Activated CD8-positive, alpha-beta T cell treated with anti-CD3 and anti-CD28 coated beads for 36 hours (primary cell): ENCODE measurements at regions of chr16 and their contacts with region 1.

Region 1: GRCh38 chr16:28943281-28943680 is 7.5 kb upstream of the NFATC2IP start:
- DNase-seq: no peak
- ATAC-seq: no peak
- H3K4me3 Mint-ChIP-seq: no peak overlapping the region
- H3K27ac Mint-ChIP-seq: no peak overlapping the region
- H3K4me1 Mint-ChIP-seq: peaks cover 8% of the 10 kb centered on the region
- H3K27me3 Mint-ChIP-seq: no peaks in the 10 kb centered on the region
- CTCF ChIP-seq: no peak

Region 2: DNA sequence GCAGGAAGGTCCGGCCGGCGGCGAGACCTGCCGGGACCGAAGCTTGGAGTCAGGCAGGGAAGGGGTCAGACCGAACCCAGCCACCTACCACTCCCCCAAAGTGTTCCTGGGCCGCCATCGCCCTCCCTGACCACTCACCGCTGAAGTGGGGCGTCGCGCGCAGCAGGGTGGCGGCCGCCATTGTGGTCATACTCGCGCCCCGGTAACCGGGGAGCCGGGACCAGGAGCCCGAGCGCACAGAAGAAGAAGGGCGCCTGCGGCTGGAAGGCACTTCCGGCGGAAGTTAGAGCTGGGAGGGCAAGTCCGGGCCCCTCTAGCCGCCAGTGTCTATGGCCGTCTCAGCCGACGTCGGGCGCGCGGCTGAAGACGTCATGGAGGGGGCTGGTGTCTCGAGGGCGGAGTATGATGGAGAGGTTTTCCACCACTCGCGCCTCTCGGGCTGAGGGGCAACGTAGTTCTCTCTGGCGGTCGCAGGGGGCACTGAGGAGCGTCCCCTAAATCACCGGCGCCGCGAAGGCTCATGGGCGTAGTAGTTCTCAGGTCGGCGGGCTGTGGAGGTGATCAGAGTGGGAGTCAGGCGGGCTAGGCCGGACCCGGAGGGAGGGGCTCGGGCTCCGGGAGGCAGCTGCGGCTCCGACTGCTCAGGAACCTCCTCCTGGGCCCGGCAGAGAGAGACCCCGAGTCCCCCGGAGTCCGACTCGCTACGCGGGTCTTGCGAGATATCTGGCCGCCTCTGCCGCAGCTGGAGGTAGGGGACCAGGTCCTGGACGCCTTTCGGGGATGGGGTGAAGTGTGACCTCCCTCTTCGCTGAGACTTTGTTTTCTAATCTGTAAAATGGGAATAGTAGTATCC is 97.0 kb before region 1 on chr16 and contains the start of gene TUFM:
- CTCF ChIA-PET with region 1: interaction called, 36 read pairs
- POLR2A ChIA-PET with region 1: interaction called, 3 read pairs
- intact Hi-C with region 1: no loop called
- DNase-seq: peak; percentile 98
- ATAC-seq: peak; percentile 95
- H3K4me3 Mint-ChIP-seq: peak within 1 kb of the TSS; percentile 99
- H3K27ac Mint-ChIP-seq: peak within 1 kb of the TSS; percentile 98
- H3K4me1 Mint-ChIP-seq: peaks cover 20% of the 10 kb centered on the region
- H3K27me3 Mint-ChIP-seq: no peaks in the 10 kb centered on the region
- CTCF ChIP-seq: peak; percentile 59
- total RNA-seq, gene TUFM: 309 to 323 TPM

Region 3: DNA sequence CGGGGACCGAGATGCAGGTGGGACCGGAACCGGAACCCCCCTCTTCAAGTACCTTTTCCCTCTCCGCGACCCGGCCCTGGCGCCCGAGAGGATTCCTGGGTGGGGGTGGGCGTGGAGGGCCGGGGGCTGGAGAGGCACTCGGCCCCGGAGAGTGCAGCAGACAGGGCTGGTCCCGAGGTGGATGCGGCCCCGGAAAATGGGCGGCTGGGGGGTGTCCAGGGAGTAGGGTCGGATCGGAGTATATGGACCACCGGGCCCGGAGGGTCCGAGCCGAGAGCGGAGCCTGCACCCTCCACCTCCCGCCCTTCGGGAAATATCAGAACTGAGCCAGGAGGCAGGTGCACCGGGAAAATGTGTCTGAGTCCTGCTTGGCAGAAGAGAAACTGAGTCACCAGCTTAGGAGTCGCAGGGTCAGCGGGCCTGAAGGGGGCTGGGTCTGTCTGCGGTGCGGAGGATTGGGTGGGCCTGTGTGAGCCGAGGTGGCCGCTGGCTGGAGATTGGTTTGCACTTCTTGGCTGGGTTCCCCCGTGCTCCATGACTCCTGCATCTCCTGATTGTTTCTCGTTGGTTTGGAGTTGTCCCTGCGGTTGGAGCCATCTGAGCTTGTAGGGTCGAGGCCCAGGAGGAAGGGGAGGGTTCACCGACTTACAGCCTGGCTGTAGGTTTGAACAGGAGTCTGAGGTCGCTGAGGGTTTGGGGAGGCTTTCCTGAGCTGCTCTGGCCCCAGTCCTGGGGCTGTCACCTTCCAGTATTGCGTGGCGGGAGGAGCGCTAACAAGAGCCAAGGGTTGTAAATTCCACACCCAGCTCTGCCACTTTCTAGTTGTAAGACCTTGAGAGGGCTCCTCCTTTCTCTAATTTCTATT is 79.1 kb before region 1 on chr16:
- CTCF ChIA-PET with region 1: interaction called, 49 read pairs
- POLR2A ChIA-PET with region 1: interaction called, 3 read pairs
- intact Hi-C with region 1: no loop called
- DNase-seq: no peak
- ATAC-seq: no peak
- H3K4me3 Mint-ChIP-seq: peak overlapping the region; percentile 98
- H3K27ac Mint-ChIP-seq: peak overlapping the region; percentile 99
- H3K4me1 Mint-ChIP-seq: peaks cover 24% of the 10 kb centered on the region
- H3K27me3 Mint-ChIP-seq: no peaks in the 10 kb centered on the region
- CTCF ChIP-seq: no peak

Region 4: DNA sequence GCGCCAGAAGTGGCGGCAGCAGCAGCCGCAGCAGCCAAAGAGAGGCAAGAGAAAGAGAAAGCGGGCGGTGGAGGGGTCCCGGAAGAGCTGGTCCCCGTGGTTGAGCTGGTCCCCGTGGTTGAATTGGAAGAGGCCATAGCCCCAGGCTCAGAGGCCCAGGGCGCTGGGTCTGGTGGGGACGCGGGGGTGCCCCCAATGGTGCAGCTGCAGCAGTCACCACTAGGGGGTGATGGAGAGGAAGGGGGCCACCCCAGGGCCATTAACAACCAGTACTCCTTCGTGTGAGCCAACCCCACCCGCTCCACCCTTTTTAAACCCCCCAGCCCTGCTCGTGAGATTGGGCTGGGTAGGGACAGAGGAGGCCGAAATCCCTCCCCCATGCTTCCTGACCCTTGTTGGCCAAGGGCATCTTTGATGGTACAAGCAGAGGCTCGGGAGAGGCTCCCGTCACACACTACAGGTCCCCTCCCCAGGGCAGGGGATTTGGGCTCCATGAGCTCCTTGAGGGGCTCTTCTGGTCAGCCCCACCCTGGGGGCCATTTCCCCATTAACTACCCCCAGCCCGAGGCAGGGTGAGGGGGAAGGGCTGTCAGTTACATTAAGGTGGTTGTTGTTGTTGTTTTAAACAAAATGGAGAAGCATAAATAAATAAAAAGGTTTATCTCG is 69.6 kb before region 1 on chr16:
- CTCF ChIA-PET with region 1: interaction called, 49 read pairs
- POLR2A ChIA-PET with region 1: interaction called, 3 read pairs
- intact Hi-C with region 1: loop called (anchors 5 kb)
- DNase-seq: peak; percentile 66
- ATAC-seq: peak; percentile 94
- H3K4me3 Mint-ChIP-seq: no peak overlapping the region
- H3K27ac Mint-ChIP-seq: no peak overlapping the region
- H3K4me1 Mint-ChIP-seq: peaks cover 5% of the 10 kb centered on the region
- H3K27me3 Mint-ChIP-seq: no peaks in the 10 kb centered on the region
- CTCF ChIP-seq: peak; percentile 85

Region 5: DNA sequence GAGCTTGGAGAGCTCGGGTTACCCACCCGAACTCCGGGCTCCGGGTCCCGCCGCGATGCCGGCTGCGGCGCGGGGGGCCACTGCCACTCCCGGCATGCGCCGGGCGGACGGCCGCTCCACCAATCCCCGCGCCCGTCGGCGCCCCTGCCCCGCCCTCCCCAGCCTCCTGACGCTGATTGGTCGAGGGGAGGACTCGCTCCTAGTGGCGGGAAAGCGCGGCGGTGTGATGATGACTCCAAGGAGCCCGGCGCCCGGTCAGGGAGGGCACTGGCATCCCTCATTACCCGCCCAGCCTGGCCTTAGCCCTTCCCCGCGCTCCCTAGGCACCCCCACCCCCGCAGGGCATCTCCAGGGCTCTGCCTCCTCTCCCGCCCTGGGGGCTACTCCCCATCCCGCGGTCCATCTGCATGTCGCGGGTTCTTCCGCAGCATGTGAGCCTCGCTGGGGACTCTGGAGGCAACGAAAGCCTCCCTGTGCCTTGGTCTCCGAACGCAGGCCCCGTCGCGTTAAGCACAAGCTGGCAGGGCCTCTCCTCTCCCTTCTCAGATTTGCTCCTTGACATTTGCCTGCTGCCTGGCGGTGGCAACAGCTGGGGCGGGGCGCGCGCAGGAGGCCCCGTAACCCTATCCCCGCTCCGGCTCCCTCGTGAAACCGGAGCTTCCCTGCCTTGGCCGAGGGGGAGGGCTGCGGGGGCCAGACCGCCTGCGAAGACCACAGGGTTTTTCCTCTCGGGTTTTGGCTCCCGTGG is 63.3 kb before region 1 on chr16:
- CTCF ChIA-PET with region 1: interaction called, 49 read pairs
- POLR2A ChIA-PET with region 1: no interaction called
- intact Hi-C with region 1: no loop called
- DNase-seq: peak; percentile 94
- ATAC-seq: peak; percentile 96
- H3K4me3 Mint-ChIP-seq: peak overlapping the region; percentile 90
- H3K27ac Mint-ChIP-seq: peak overlapping the region; percentile 79
- H3K4me1 Mint-ChIP-seq: peaks cover 18% of the 10 kb centered on the region
- H3K27me3 Mint-ChIP-seq: peaks cover 10% of the 10 kb centered on the region
- CTCF ChIP-seq: no peak

Region 6: DNA sequence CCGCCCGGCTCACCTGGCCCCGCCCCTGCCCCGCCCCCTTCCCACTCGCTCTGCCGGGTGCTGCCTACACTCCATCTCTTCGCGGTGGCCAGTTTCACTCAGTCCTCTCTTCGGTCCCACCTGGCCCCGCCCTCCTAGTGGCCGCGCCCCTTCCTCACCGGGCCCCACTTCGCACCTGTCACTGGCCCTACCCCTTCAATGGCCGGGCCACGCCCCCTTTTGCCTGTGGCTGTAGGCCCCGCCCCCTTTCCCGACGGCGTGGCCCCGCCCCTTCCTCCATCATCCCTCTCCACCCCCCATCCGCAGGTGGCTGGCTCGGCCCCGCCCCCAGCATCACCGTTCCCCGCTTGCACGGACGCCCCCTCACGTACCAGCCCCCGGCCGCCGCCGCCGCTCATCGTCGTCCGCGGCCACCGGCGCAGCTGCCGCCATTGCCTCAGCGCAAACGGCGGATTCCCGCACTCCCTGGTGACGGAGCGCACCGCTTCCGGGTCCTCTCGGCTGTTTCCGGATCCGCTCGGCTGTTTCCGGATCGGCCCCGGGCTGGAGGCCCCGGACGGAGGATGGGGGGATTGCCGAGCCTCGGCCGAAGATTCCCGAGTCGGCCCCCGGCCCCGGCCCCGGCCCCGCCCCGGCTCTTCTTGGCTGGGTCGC is 18.4 kb before region 1 on chr16 and contains the start of gene RABEP2:
- CTCF ChIA-PET with region 1: interaction called, 87 read pairs
- POLR2A ChIA-PET with region 1: interaction called, 8 read pairs
- intact Hi-C with region 1: no loop called
- DNase-seq: peak; percentile 96
- ATAC-seq: peak; percentile 90
- H3K4me3 Mint-ChIP-seq: peak within 1 kb of the TSS; percentile 93
- H3K27ac Mint-ChIP-seq: peak within 1 kb of the TSS; percentile 97
- H3K4me1 Mint-ChIP-seq: peaks cover 15% of the 10 kb centered on the region
- H3K27me3 Mint-ChIP-seq: no peaks in the 10 kb centered on the region
- CTCF ChIP-seq: no peak
- total RNA-seq, gene RABEP2: 13.1 to 14.0 TPM

Region 7: DNA sequence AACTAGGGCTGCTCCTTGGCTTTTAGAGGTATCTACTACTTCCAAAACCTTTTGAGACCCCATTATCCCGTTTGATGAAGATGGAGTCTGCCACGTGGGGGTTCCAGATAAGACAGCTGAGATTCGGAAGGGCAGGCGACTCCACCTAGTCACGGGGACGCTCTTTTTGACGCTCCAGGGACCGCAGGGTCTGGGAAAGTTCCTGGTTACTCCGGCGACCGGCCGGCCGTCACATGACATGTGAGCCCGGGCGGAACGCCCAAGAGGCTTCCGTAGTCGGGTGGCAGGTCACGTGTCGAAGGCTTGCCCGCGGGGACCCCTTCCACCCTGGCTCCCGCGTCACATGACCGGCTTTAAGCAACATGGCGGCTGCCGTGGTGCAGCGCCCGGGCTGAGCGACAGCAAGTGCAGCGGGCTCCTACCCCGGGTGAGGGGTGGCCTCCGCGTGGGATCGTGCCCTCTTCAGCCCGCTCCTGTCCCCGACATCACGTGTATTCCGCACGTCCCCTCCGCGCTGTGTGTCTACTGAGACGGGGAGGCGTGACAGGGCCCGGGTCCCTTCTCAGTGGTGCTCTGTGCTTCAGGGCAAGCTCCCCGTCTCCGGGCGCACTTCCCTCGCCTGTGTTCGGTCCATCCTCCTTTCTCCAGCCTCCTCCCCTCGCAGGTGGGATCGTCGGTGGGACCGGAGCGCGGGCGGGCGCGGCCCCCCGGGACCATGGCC is 31.3 kb after region 1 on chr16 and contains the start of gene SPNS1:
- CTCF ChIA-PET with region 1: interaction called, 11 read pairs
- POLR2A ChIA-PET with region 1: interaction called, 4 read pairs
- intact Hi-C with region 1: no loop called
- DNase-seq: peak; percentile 98
- ATAC-seq: peak; percentile 94
- H3K4me3 Mint-ChIP-seq: peak within 1 kb of the TSS; percentile 98
- H3K27ac Mint-ChIP-seq: peak within 1 kb of the TSS; percentile 90
- H3K4me1 Mint-ChIP-seq: peaks cover 29% of the 10 kb centered on the region
- H3K27me3 Mint-ChIP-seq: no peaks in the 10 kb centered on the region
- CTCF ChIP-seq: no peak
- total RNA-seq, gene SPNS1: 14.6 to 18.2 TPM

Region 8: DNA sequence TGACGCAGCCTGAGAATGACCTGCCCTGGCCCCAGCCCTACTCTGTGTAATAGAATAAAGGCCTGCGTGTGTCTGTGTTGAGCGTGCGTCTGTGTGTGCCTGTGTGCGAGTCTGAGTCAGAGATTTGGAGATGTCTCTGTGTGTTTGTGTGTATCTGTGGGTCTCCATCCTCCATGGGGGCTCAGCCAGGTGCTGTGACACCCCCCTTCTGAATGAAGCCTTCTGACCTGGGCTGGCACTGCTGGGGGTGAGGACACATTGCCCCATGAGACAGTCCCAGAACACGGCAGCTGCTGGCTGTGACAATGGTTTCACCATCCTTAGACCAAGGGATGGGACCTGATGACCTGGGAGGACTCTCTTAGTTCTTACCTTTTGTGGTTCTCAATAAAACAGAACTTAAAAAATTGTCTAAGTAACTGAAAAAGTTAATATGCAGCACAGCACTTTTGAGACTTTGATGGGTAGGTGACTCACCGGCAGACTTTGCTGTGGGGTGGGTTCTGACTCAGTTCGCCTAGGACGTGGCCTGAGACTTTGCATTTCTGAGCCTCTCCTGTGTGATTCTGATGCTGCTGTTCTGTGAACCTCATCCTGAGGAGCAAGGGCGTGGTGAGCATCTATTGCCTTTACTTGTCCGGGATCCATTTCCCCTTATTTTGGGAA is 47.2 kb after region 1 on chr16:
- CTCF ChIA-PET with region 1: no interaction called
- POLR2A ChIA-PET with region 1: no interaction called
- intact Hi-C with region 1: no loop called
- DNase-seq: peak; percentile 87
- ATAC-seq: peak; percentile 78
- H3K4me3 Mint-ChIP-seq: peak overlapping the region; percentile 94
- H3K27ac Mint-ChIP-seq: peak overlapping the region; percentile 96
- H3K4me1 Mint-ChIP-seq: peaks cover 52% of the 10 kb centered on the region
- H3K27me3 Mint-ChIP-seq: no peaks in the 10 kb centered on the region
- CTCF ChIP-seq: no peak

Region 9: DNA sequence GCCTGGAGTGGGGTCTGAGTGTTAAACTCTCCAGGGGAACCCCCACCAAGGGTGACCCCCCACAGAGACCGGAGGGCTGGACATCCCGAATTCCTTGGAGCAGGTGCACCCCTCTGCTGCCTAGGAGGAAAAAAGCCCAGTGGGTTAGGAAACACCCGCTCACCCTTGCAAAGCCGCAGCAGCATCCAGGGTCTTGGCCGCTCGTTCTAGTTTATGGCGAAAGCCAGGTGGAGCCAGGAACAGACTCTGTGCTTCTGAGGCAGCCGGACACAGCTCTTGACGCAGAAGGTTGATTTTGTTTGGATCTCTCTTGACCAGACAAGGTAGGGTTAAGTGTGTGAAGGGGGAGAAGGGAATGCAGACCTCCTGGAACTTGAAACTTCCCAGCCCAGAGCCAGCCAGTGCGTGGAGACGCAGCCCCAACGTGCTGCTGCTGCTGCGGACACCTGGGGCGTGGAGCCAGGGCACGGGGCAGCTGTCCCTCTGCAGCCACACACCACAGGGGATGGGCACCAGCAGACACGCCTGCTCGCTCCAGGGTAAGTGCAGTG is 196.1 kb after region 1 on chr16:
- CTCF ChIA-PET with region 1: no interaction called
- POLR2A ChIA-PET with region 1: no interaction called
- intact Hi-C with region 1: no loop called
- DNase-seq: no peak
- ATAC-seq: no peak
- H3K4me3 Mint-ChIP-seq: no peak overlapping the region
- H3K27ac Mint-ChIP-seq: no peak overlapping the region
- H3K4me1 Mint-ChIP-seq: peaks cover 2% of the 10 kb centered on the region
- H3K27me3 Mint-ChIP-seq: no peaks in the 10 kb centered on the region
- CTCF ChIP-seq: no peak